CD8-positive, alpha-beta T cell (primary cell): ENCODE measurements at regions of chr4 and their contacts with region 1.

Region 1: GRCh38 chr4:6695660-6696630 is 2.3 kb downstream of the S100P start:
- DNase-seq: peak in 8 of 9 experiments; percentile 46 to 86 (median 70)
- ATAC-seq: peak; percentile 88
- H3K4me3 ChIP-seq: peak overlapping the region in 1 of 2 experiments; percentile 10
- H3K4me3 Mint-ChIP-seq: peak overlapping the region; percentile 30
- H3K27ac ChIP-seq: peak overlapping the region; percentile 67 to 91
- H3K27ac Mint-ChIP-seq: peak overlapping the region; percentile 93
- H3K4me1 ChIP-seq: peaks cover 86% of the 10 kb centered on the region
- H3K4me1 Mint-ChIP-seq: peaks cover 76% of the 10 kb centered on the region
- H3K27me3 ChIP-seq: no peaks in the 10 kb centered on the region
- H3K27me3 Mint-ChIP-seq: no peaks in the 10 kb centered on the region
- CTCF ChIP-seq: no peak

Region 2: GRCh38 chr4:6681187-6681586 is 14.8 kb before region 1 on chr4:
- CTCF ChIA-PET with region 1: interaction called, 68 read pairs
- POLR2A ChIA-PET with region 1: interaction called, 155 read pairs
- intact Hi-C with region 1: no loop called
- DNase-seq: no peak
- ATAC-seq: no peak
- H3K4me3 ChIP-seq: no peak overlapping the region
- H3K4me3 Mint-ChIP-seq: no peak overlapping the region
- H3K27ac ChIP-seq: no peak overlapping the region
- H3K27ac Mint-ChIP-seq: no peak overlapping the region
- H3K4me1 ChIP-seq: peaks cover 23% of the 10 kb centered on the region
- H3K4me1 Mint-ChIP-seq: peaks cover 51% of the 10 kb centered on the region
- H3K27me3 ChIP-seq: no peaks in the 10 kb centered on the region
- H3K27me3 Mint-ChIP-seq: no peaks in the 10 kb centered on the region
- CTCF ChIP-seq: no peak

Region 3: GRCh38 chr4:6709230-6710114 is 13.5 kb after region 1 on chr4 and contains the start of gene MRFAP1L1:
- CTCF ChIA-PET with region 1: interaction called, 9 read pairs
- POLR2A ChIA-PET with region 1: interaction called, 40 read pairs
- intact Hi-C with region 1: loop called (anchors 1 to 2 kb)
- DNase-seq: peak; percentile 92 to 99 (median 97)
- ATAC-seq: peak; percentile 89
- H3K4me3 ChIP-seq: peak within 1 kb of the TSS; percentile 73 to 86
- H3K4me3 Mint-ChIP-seq: peak within 1 kb of the TSS; percentile 98
- H3K27ac ChIP-seq: peak within 1 kb of the TSS; percentile 79
- H3K27ac Mint-ChIP-seq: peak within 1 kb of the TSS; percentile 99
- H3K4me1 ChIP-seq: peaks cover 48% of the 10 kb centered on the region
- H3K4me1 Mint-ChIP-seq: peaks cover 65% of the 10 kb centered on the region
- H3K27me3 ChIP-seq: no peaks in the 10 kb centered on the region
- H3K27me3 Mint-ChIP-seq: no peaks in the 10 kb centered on the region
- CTCF ChIP-seq: no peak
- total RNA-seq, gene MRFAP1L1: 27.5 to 30.0 TPM